CD4-positive, alpha-beta T cell (primary cell): ENCODE measurements at regions of chr18 and their contacts with region 1.

Region 1: GRCh38 chr18:66066191-66066590 is 315.4 kb downstream of the CDH7 start:
- DNase-seq: no peak
- ATAC-seq: no peak
- H3K4me3 ChIP-seq: no peak overlapping the region
- H3K4me3 Mint-ChIP-seq: no peak overlapping the region
- H3K27ac ChIP-seq: no peak overlapping the region
- H3K27ac Mint-ChIP-seq: no peak overlapping the region
- H3K4me1 ChIP-seq: no peaks in the 10 kb centered on the region
- H3K4me1 Mint-ChIP-seq: no peaks in the 10 kb centered on the region
- H3K27me3 ChIP-seq: no peaks in the 10 kb centered on the region
- H3K27me3 Mint-ChIP-seq: no peaks in the 10 kb centered on the region
- CTCF ChIP-seq: no peak

Region 2: GRCh38 chr18:66124394-66124793 is 58.2 kb after region 1 on chr18:
- CTCF ChIA-PET with region 1: no interaction called
- POLR2A ChIA-PET with region 1: no interaction called
- intact Hi-C with region 1: loop called in 1 of 2 experiments (anchors 10 kb)
- DNase-seq: no peak
- ATAC-seq: no peak
- H3K4me3 ChIP-seq: no peak overlapping the region
- H3K4me3 Mint-ChIP-seq: no peak overlapping the region
- H3K27ac ChIP-seq: no peak overlapping the region
- H3K27ac Mint-ChIP-seq: no peak overlapping the region
- H3K4me1 ChIP-seq: no peaks in the 10 kb centered on the region
- H3K4me1 Mint-ChIP-seq: no peaks in the 10 kb centered on the region
- H3K27me3 ChIP-seq: no peaks in the 10 kb centered on the region
- H3K27me3 Mint-ChIP-seq: no peaks in the 10 kb centered on the region
- CTCF ChIP-seq: no peak

Region 3: DNA sequence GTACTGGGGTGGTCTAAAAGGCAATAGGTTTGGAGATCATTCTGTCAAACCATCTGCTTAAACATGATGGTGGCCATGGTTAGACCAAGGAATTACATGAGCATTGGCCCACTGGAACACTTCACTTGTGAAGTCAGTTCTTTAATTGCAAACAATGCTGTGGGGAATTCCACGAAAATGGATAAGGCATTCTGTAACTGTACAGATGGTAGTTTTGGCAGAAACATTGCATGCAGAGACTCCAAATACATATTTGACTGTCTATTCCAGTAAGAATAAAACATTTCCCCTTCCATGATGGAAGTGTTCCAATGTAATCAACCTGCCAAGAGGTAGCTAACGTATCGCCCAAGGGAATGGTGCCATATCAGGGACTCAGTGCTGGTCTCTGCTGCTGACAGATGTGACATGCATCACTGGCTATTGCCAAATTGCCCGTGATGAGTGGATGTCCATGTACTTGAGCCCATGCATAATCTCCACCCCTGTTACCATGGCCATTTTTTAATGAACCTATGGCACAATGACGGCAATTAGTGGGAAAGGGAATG is 102.6 kb after region 1 on chr18:
- CTCF ChIA-PET with region 1: no interaction called
- POLR2A ChIA-PET with region 1: no interaction called
- intact Hi-C with region 1: no loop called
- DNase-seq: no peak
- ATAC-seq: no peak
- H3K4me3 ChIP-seq: no peak overlapping the region
- H3K4me3 Mint-ChIP-seq: no peak overlapping the region
- H3K27ac ChIP-seq: no peak overlapping the region
- H3K27ac Mint-ChIP-seq: no peak overlapping the region
- H3K4me1 ChIP-seq: no peaks in the 10 kb centered on the region
- H3K4me1 Mint-ChIP-seq: no peaks in the 10 kb centered on the region
- H3K27me3 ChIP-seq: no peaks in the 10 kb centered on the region
- H3K27me3 Mint-ChIP-seq: no peaks in the 10 kb centered on the region
- CTCF ChIP-seq: no peak